ENCODE measurements at regions of chr1 and their contacts with region 1.

Region 1: GRCh38 chr1:236795035-236795756 is at the start of gene MTR:
- DNase-seq: peak; percentile 94
- H3K4me3 Mint-ChIP-seq: peak within 1 kb of the TSS; percentile 92
- H3K27ac Mint-ChIP-seq: peak within 1 kb of the TSS; percentile 98
- H3K4me1 Mint-ChIP-seq: peaks cover 32% of the 10 kb centered on the region
- H3K27me3 Mint-ChIP-seq: peaks cover 10% of the 10 kb centered on the region
- total RNA-seq, gene MTR: 59.2 and 62.2 TPM in 2 replicates

Region 2: DNA sequence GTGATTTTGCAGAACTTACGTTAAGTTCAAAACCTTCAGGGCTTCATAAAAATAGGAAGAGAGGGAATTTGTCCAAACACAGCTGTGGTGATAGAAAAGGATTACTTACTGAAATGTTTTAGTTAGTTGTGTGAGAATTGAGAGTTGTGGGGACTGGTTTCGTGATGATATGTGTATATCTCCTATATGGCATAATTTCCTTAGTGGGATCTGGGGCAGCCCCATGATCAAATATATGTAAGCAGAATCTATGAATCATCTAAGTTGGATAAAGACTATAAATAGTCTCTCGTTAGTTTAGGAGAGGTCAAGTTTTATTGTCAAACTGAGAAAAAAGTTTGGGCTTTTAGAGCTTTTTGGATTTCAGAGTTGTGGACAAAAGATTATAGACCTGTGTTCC is 14.8 kb after region 1 on chr1:
- intact Hi-C with region 1: loop called (anchors 2 kb)
- DNase-seq: no peak
- H3K4me3 Mint-ChIP-seq: no peak overlapping the region
- H3K27ac Mint-ChIP-seq: peak overlapping the region; percentile 51
- H3K4me1 Mint-ChIP-seq: peaks cover 15% of the 10 kb centered on the region
- H3K27me3 Mint-ChIP-seq: no peaks in the 10 kb centered on the region

Region 3: GRCh38 chr1:236868625-236869467 is 73.7 kb after region 1 on chr1:
- intact Hi-C with region 1: loop called (anchors 5 kb)
- DNase-seq: peak; percentile 18
- H3K4me3 Mint-ChIP-seq: no peak overlapping the region
- H3K27ac Mint-ChIP-seq: no peak overlapping the region
- H3K4me1 Mint-ChIP-seq: peaks cover 17% of the 10 kb centered on the region
- H3K27me3 Mint-ChIP-seq: no peaks in the 10 kb centered on the region

Measured in activated T-helper 2 cell treated with anti-CD3 and anti-CD28 coated beads, Interferon-gamma antibody, Interleukin-2, Interleukin-4, amounts not matched to agents 10 μg/mL and 5 μg/mL and 100 μg/mL, durations not matched to agents 14 hours and 24 hours and 36 hours (primary cell).